ENCODE measurements at regions of chr9 and their contacts with region 1.

Region 1: DNA sequence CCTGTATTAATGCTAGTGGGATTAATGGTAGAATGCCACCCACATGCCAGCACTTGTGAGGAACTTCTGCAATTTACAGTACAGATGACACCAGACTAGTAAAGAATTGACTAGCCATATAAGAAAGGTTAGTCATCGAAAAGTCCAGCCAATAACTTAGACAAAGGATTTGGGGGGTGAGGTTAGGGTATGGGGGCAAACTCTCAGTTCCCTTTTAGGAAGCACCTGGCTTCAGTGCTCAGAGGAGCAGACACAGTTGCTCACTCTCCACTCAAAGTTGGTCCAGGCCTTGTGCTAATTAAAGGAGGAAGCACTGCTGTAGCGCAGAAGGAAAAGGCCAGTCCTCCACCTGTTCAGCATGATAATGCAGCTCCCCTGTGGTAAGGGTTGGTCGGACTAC is 25.2 kb downstream of the TGFBR1 start:
- DNase-seq: no peak
- H3K4me3 ChIP-seq: no peak overlapping the region
- H3K27ac ChIP-seq: no peak overlapping the region
- H3K4me1 ChIP-seq: peaks cover 8 to 32% (median 17%) of the 10 kb centered on the region in 4 donors
- H3K27me3 ChIP-seq: no peaks in the 10 kb centered on the region
- CTCF ChIP-seq: no peak
- EP300 ChIP-seq: no peak
- POLR2A ChIP-seq: no peak

Region 2: DNA sequence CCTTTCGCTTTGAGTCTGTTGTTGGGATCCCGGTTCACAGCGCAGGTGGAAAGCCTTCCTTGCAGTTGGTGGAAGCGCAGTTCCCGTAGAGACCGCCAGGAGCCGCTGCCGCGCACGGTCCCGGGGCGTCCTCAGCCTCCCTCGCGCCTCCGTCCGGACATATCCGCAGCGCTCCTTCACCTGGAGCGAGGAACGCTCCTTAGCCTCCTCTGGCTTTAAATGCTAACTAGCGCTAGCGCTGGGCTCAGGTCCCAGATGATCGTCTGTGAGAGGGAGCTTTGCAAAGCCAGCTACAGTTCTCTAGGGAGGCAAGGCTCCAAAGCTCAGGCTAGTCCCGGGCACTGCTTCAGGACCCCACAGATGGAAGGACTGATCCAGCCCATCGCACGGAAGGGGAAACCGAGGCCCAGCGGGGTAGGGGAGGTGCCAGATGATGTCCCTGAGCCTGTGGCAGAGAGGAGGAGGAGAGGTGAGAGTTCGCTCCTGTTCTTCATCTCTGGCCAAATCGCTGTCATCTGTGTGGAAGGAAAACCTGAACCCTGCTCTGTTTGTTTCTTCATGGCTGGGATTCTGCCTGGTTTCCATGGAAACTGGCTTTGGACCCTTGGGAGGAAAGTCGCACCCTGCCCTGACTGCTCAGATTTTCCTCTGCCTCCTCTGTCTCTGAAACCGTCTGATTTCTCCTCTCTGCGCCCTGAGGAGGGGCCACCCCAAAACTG is 154.9 kb before region 1 on chr9:
- intact Hi-C with region 1: no loop called
- DNase-seq: peak; percentile 96
- H3K4me3 ChIP-seq: peak overlapping the region; percentile 41 to 52 (median 41)
- H3K27ac ChIP-seq: peak overlapping the region; percentile 84 to 89 (median 87)
- H3K4me1 ChIP-seq: peaks cover 73 to 98% (median 92%) of the 10 kb centered on the region in 4 donors
- H3K27me3 ChIP-seq: no peaks in the 10 kb centered on the region
- CTCF ChIP-seq: peak in 2 of 3 experiments; percentile 98 to 99
- EP300 ChIP-seq: no peak
- POLR2A ChIP-seq: no peak

Region 3: GRCh38 chr9:98998441-98999151 is 131.5 kb before region 1 on chr9:
- intact Hi-C with region 1: loop called (anchors 5 kb)
- DNase-seq: no peak
- H3K4me3 ChIP-seq: peak overlapping the region in 2 of 4 donors; percentile 6 to 9
- H3K27ac ChIP-seq: peak overlapping the region; percentile 78 to 86 (median 80)
- H3K4me1 ChIP-seq: peaks cover 51 to 62% (median 58%) of the 10 kb centered on the region in 4 donors
- H3K27me3 ChIP-seq: no peaks in the 10 kb centered on the region
- CTCF ChIP-seq: peak; percentile 84 to 94 (median 89)
- EP300 ChIP-seq: no peak
- POLR2A ChIP-seq: no peak

Region 4: DNA sequence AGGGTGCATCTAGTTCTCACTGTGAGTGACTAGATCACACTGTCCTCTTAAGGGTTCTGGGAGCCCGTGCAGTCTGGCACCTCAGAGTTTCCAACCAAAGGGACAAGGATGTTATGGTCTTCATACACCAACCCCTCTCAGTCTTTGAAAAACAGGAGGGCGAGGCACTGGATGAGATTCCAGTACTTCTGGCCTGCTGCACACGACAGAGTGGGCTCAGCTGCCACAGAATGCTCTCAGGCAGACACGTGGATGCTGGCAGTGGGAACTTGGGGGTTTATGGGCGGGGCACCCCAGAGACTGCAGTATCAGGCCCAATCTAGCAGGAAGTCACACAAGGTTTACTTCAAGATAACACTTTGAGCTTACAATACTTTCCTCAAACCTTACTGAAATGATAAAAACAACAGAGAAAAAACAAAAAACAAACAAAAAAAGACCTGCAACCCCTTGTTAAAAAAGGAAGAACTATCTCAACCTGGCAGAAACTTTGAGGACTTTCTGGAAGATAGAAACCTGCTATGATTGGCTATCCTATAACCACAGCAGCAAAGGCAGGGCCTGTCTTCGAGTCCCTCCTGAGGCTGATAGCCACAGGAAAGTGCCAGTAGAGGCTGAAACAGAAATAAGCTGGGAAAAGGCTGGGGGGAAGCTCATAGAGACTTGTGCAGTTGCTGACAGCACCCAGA is 53.4 kb before region 1 on chr9:
- intact Hi-C with region 1: loop called (anchors 2 kb)
- DNase-seq: no peak
- H3K4me3 ChIP-seq: no peak overlapping the region
- H3K27ac ChIP-seq: no peak overlapping the region
- H3K4me1 ChIP-seq: peaks cover 4 to 12% (median 10%) of the 10 kb centered on the region in 4 donors
- H3K27me3 ChIP-seq: no peaks in the 10 kb centered on the region
- CTCF ChIP-seq: no peak
- EP300 ChIP-seq: no peak
- POLR2A ChIP-seq: no peak

Region 5: DNA sequence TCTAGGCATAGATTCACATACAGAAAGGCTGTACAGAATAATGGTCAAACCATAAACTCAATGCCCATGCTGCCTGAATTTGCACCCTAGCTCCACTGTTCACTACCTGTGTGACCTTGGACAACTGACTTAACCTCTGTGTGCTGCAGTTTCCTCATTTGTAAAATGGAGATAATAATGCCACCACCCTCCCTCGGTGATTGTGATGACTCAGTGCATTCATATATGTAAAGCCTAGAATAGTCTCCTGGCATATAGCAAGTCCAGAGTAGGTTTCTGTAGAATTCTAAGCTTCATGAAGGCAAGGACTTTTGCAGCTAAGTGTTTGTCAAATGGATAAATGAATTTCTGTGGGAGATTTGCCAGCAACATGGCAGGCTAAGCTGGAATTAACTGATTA is 393.8 kb after region 1 on chr9:
- intact Hi-C with region 1: no loop called
- DNase-seq: no peak
- H3K4me3 ChIP-seq: no peak overlapping the region
- H3K27ac ChIP-seq: no peak overlapping the region
- H3K4me1 ChIP-seq: no peaks in the 10 kb centered on the region
- H3K27me3 ChIP-seq: no peaks in the 10 kb centered on the region
- CTCF ChIP-seq: no peak
- EP300 ChIP-seq: no peak
- POLR2A ChIP-seq: no peak

Measured in esophagus muscularis mucosa (tissue), 4 donors.